Motor neuron (in vitro differentiated cells): ENCODE measurements at regions of chr7 and their contacts with region 1.

Region 1: DNA sequence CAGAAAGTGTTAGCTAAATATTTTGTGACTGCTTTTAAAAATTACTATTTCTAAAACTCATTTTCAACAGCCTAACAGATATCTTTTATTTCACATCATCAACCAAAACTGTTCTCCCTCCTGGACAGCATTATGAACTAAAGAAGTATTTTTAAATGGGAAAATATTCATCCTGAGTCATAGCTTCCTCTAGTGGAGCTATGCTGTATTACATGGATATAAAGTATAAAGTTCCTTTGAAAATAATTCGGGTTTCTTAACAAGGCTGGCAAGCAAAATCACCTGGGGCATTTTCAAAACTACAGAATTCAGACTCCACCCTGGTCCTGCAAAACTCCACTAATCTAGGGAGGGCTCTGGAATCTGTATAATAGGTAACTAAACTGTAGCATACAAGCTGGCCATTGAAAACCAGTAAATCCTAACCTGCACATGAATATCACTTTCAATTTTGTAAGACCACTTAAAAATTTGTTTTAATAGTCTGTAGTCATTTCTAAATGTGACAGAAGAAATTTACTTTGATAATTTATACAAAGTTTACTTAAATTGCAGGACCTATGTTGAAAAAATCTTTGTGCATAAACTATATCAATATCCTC is 53.5 kb downstream of the SCIN start:
- ATAC-seq: peak in 3 of 8 experiments; percentile 45 to 68 (median 50)
- H3K4me3 ChIP-seq: no peak overlapping the region
- H3K27ac ChIP-seq: no peak overlapping the region
- H3K4me1 ChIP-seq: no peaks in the 10 kb centered on the region

Region 2: GRCh38 chr7:12539681-12540080 is 84.3 kb before region 1 on chr7:
- in situ Hi-C with region 1: loop called in 2 of 9 experiments (anchors 10 to 25 kb)
- ATAC-seq: no peak
- H3K4me3 ChIP-seq: no peak overlapping the region
- H3K27ac ChIP-seq: no peak overlapping the region
- H3K4me1 ChIP-seq: no peaks in the 10 kb centered on the region